Right ventricle myocardium inferior (tissue), 1 donor: ENCODE measurements at regions of chr13 and their contacts with region 1.

Region 1: GRCh38 chr13:36858290-36858689 is 39.3 kb downstream of the RFXAP start:
- DNase-seq: no peak
- ATAC-seq: peak; percentile 39

Region 2: DNA sequence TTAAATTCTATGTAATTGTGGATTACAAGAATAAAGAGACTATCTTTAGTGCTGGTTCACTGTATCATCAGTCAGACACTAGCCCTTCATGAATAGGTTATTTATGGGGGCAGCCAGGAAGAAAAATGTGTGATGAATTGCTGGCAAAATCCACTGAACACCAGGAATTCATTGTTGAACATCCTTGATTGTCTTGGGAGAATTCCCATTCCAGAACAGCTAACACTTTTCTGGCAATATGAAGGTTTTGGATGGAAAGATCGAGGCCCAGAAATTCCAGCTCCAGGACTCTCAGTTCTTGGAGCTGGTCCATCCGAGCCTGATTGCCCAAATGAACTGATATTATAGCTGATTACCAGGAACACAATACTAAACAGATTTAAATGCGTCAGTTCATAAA is 500.6 kb before region 1 on chr13:
- intact Hi-C with region 1: no loop called
- DNase-seq: no peak
- ATAC-seq: peak; percentile 73

Region 3: DNA sequence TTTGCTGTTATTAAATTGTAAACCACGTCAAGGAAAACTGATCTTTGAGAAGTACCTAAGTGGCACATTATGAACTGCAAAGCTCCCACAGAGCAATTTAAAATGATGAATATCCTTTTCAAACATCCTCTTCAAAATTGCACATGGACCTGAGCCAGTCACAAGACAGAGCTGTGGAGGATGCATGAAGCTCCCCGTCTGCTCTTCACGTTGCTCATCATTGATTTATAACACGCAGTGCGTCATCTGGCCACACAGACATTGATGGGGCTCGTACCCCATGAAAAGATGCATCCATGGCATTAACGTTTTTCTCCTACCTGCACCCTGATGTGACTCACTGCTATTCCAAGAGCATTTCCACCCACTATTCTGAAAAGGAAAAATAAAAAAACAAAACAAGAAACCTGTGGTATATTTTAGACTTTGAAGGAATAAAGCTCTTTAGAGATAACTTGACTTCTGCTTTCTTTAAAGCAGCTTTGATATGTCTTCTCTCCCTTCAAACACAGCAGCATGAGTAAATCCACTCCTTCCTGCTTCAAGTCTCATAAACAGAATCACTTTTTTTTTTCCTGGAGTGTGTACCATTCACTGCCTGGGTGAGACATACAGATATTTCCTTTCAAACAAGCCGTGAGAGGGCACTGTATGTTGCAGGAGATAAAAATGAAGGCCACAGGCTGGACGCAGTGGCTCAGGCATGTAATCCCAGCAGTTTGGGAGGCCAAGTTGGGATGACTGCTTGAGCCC is 191.6 kb before region 1 on chr13:
- intact Hi-C with region 1: no loop called
- DNase-seq: no peak
- ATAC-seq: no peak

Region 4: DNA sequence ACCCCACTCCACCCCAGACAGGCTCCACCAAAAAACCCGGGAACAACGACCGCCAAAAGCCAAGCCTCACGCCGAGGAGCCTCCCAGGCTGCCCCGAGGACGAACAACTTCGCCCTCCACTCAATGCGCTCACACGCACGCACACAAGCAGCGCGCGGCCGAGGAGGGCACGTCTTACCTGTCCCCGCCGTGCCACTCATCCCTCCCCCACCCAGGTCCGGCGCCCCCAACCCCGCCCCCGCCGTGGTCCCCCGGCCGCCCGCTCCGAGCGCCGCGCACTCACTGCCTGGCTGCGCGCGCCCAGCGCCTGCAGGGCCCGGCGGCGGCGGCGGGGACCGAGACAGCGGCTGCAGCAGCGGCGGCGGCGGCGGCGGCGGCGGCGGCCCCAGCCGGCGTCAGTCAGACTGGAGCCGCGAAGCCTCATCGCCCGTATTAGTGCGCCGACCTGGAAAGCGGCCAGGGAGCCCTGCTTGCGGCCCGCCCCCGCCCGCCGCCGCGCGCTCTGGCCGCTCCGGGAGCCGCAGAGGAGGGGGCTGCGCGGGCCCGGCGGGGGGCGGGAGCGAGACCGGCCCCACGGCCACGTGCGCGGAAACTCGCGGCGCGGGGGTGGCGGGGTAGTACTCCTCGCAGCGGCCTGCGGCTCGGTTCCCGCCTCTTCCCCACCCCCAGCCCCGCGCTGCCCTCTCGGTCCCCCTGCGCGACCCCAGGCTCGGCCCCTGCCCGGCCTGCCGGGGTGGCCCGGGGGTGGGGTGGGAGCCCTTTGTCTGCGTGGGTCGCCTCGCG is 61.7 kb after region 1 on chr13 and contains the start of gene SMAD9:
- intact Hi-C with region 1: loop called (anchors 5 kb)
- DNase-seq: peak; percentile 87
- ATAC-seq: peak; percentile 67
- total RNA-seq, gene SMAD9: 1.9 TPM

Region 5: DNA sequence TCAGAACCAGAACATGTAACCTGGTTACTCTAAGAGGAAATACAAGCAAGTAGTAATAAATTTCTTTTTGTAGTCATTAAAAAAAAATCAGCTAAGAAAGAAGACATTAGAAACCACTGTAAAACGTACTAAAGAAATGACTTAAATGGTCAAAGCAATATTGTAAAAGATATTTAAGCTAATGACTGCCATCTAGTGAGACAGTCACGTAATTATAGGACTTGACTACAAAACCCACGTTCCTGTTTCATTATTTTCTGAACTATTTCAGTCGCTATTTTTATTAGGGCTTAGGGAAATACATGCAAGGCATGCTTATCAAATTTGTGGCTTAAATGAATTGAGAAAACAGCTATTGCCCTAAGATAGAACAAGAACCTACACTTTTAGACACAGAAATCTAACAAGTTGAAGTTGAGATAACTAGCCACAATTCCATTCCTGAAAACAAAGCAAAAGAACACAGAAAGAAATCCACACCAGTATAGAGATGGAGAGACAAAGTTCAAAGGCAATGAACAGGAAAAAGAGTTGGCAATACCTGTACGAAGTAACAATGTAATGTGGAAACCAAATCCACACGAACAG is 123.0 kb after region 1 on chr13:
- intact Hi-C with region 1: loop called (anchors 2 kb)
- DNase-seq: no peak
- ATAC-seq: no peak